ENCODE measurements at regions of chr7 and their contacts with region 1.

Region 1: GRCh38 chr7:82234457-82235049 is 209.0 kb downstream of the CACNA2D1 start:
- DNase-seq: peak; percentile 31
- ATAC-seq: 0 out of 2 replicates have a peak, but pooled peaks have one; percentile 38
- H3K4me3 ChIP-seq: no peak overlapping the region
- H3K27ac ChIP-seq: no peak overlapping the region
- H3K4me1 ChIP-seq: no peaks in the 10 kb centered on the region
- H3K27me3 ChIP-seq: no peaks in the 10 kb centered on the region
- CTCF ChIP-seq: peak; percentile 47 to 74 (median 63); a peak in 5 of 6 replicates
- POLR2A ChIP-seq: no peak
- RAD21 ChIP-seq: peak; percentile 70

Region 2: DNA sequence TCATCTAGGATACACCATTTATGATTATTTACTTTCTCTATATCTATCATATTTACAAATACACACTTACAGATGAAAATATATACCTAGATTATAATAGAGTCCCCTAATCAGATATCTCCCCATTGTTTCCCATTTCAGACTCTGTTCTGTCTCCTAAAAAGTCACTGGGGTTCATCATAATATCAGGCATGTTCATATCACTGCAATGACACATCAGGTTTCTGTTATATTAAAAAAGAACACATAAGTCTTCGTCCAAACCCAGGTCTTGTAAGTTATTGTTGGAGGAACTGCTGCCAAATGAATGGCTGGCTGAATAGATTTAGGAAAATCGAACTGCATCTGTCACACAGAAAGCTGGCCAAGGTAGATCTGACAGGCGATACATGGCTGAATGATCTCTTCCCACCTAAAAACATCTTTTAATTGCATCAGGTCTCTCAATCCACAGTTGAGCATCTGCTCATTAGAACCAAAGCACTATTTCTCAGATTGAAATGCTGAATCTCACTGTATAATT is 30.3 kb after region 1 on chr7:
- CTCF ChIA-PET with region 1: no interaction called
- POLR2A ChIA-PET with region 1: no interaction called
- RAD21 ChIA-PET with region 1: no interaction called
- intact Hi-C with region 1: no loop called
- DNase-seq: no peak
- ATAC-seq: no peak
- H3K4me3 ChIP-seq: no peak overlapping the region
- H3K27ac ChIP-seq: no peak overlapping the region
- H3K4me1 ChIP-seq: no peaks in the 10 kb centered on the region
- H3K27me3 ChIP-seq: no peaks in the 10 kb centered on the region
- CTCF ChIP-seq: no peak
- POLR2A ChIP-seq: no peak
- RAD21 ChIP-seq: no peak

Region 3: GRCh38 chr7:82481499-82482097 is 247.0 kb after region 1 on chr7:
- CTCF ChIA-PET with region 1: interaction called, 7 read pairs
- POLR2A ChIA-PET with region 1: no interaction called
- RAD21 ChIA-PET with region 1: interaction called in 1 of 2 experiments, 3 read pairs
- intact Hi-C with region 1: loop called (anchors 5 kb)
- DNase-seq: peak; percentile 12
- ATAC-seq: no peak
- H3K4me3 ChIP-seq: no peak overlapping the region
- H3K27ac ChIP-seq: no peak overlapping the region
- H3K4me1 ChIP-seq: no peaks in the 10 kb centered on the region
- H3K27me3 ChIP-seq: no peaks in the 10 kb centered on the region
- CTCF ChIP-seq: peak; percentile 39 to 72 (median 58); a peak in 5 of 6 replicates
- POLR2A ChIP-seq: no peak
- RAD21 ChIP-seq: peak; percentile 49

Region 4: DNA sequence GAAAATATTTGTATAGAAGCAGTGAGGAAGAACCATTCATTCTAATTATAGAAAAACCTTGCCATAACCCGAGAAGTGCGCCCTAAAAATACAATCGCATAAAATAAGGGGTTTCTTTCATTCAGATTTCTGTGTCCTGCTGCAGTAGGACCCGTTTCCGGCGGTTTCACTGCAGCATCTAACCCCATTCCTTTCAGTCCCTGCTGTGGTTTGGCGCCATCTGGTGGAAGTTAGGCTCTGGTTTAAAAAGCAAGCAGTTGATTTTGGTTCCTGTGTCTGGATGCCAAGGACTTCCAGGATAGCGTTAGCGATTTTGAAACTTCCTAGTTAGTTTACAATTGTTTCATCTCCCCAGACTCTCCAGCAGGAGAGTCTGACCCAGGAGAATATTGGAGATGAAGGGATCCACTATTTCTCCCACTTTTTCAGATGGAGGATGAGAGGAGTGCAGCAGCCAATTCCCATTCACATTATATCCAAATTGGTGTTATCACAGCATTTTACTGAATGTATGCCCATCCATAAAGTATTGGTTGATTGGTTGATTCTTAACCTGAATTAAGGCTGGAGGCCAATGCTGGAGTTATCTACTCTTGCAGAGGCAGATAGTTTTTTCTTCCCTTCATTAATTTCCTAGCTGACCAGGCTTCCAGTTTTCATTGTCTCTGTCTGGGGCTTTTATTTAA is 337.8 kb after region 1 on chr7:
- CTCF ChIA-PET with region 1: interaction called, 18 read pairs
- POLR2A ChIA-PET with region 1: no interaction called
- RAD21 ChIA-PET with region 1: no interaction called
- intact Hi-C with region 1: loop called (anchors 1 kb)
- DNase-seq: peak; percentile 76
- ATAC-seq: peak; percentile 97
- H3K4me3 ChIP-seq: no peak overlapping the region
- H3K27ac ChIP-seq: no peak overlapping the region
- H3K4me1 ChIP-seq: peaks cover 0 to 8% of the 10 kb centered on the region in 2 experiments; a peak in 1 of 4 replicates
- H3K27me3 ChIP-seq: no peaks in the 10 kb centered on the region
- CTCF ChIP-seq: peak; percentile 79 to 92 (median 90)
- POLR2A ChIP-seq: no peak
- RAD21 ChIP-seq: peak; percentile 90

Region 5: GRCh38 chr7:82605247-82605872 is 370.8 kb after region 1 on chr7:
- CTCF ChIA-PET with region 1: interaction called, 15 read pairs
- POLR2A ChIA-PET with region 1: no interaction called
- RAD21 ChIA-PET with region 1: interaction called in 1 of 2 experiments, 3 read pairs
- intact Hi-C with region 1: loop called (anchors 10 kb)
- DNase-seq: peak; percentile 18
- ATAC-seq: peak; percentile 62; the same call in 1 of the 2 replicates
- H3K4me3 ChIP-seq: no peak overlapping the region
- H3K27ac ChIP-seq: no peak overlapping the region
- H3K4me1 ChIP-seq: 0 out of 4 replicates have a peak, but pooled peaks cover 0 to 2% of the 10 kb centered on the region in 2 experiments
- H3K27me3 ChIP-seq: no peaks in the 10 kb centered on the region
- CTCF ChIP-seq: peak; percentile 56 to 86 (median 60); a peak in 5 of 6 replicates
- POLR2A ChIP-seq: no peak
- RAD21 ChIP-seq: peak; percentile 74

Region 6: GRCh38 chr7:82740246-82740848 is 505.8 kb after region 1 on chr7:
- CTCF ChIA-PET with region 1: no interaction called
- POLR2A ChIA-PET with region 1: no interaction called
- RAD21 ChIA-PET with region 1: no interaction called
- intact Hi-C with region 1: no loop called
- DNase-seq: peak; percentile 50
- ATAC-seq: peak; percentile 82
- H3K4me3 ChIP-seq: no peak overlapping the region
- H3K27ac ChIP-seq: no peak overlapping the region
- H3K4me1 ChIP-seq: no peaks in the 10 kb centered on the region
- H3K27me3 ChIP-seq: no peaks in the 10 kb centered on the region
- CTCF ChIP-seq: peak; percentile 64 to 83 (median 80); a peak in 5 of 6 replicates
- POLR2A ChIP-seq: no peak
- RAD21 ChIP-seq: peak; percentile 75

Measured in HCT116 (cell line).